ENCODE measurements at regions of chr18 and their contacts with region 1.

Region 1: DNA sequence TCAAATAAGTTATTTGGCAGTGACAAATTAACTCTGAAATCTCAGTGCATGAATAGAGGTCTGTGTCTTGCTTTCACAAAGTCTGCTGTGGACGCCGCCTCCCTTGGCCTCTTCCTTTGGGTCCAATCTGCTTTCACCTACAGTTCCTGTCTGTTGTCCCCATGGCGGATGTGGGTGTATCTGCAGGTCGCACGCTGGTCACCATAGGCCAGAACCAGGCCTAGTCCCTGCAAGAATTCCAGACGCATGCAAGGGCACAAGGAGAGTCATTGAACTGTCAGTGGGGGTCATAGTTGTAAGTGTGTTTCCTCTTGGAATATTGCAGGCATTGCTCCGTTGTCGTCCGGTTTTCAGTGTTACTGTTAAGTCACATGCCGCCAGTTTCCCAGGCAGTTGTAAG is 7.4 kb downstream of the SOCS6 start:
- DNase-seq: no peak
- ATAC-seq: peak; percentile 82
- H3K4me3 ChIP-seq: peak overlapping the region; percentile 36 to 55
- H3K27ac ChIP-seq: peak overlapping the region; percentile 98
- H3K4me1 ChIP-seq: peaks cover 54% of the 10 kb centered on the region
- H3K27me3 ChIP-seq: no peaks in the 10 kb centered on the region
- CTCF ChIP-seq: no peak

Region 2: GRCh38 chr18:69152436-69152835 is 1143.9 kb before region 1 on chr18:
- CTCF ChIA-PET with region 1: no interaction called
- POLR2A ChIA-PET with region 1: no interaction called
- in situ Hi-C with region 1: no loop called
- intact Hi-C with region 1: no loop called
- DNase-seq: no peak
- ATAC-seq: no peak
- H3K4me3 ChIP-seq: no peak overlapping the region
- H3K27ac ChIP-seq: no peak overlapping the region
- H3K4me1 ChIP-seq: no peaks in the 10 kb centered on the region
- H3K27me3 ChIP-seq: no peaks in the 10 kb centered on the region
- CTCF ChIP-seq: no peak

Region 3: GRCh38 chr18:69981948-69982347 is 314.3 kb before region 1 on chr18:
- CTCF ChIA-PET with region 1: no interaction called
- POLR2A ChIA-PET with region 1: no interaction called
- in situ Hi-C with region 1: no loop called
- intact Hi-C with region 1: no loop called
- DNase-seq: no peak
- ATAC-seq: no peak
- H3K4me3 ChIP-seq: no peak overlapping the region
- H3K27ac ChIP-seq: no peak overlapping the region
- H3K4me1 ChIP-seq: no peaks in the 10 kb centered on the region
- H3K27me3 ChIP-seq: no peaks in the 10 kb centered on the region
- CTCF ChIP-seq: no peak

Region 4: GRCh38 chr18:70205421-70206397 is 90.6 kb before region 1 on chr18 and contains the start of gene RTTN:
- CTCF ChIA-PET with region 1: no interaction called
- POLR2A ChIA-PET with region 1: no interaction called
- in situ Hi-C with region 1: no loop called
- intact Hi-C with region 1: loop called (anchors 5 kb)
- DNase-seq: peak; percentile 83
- ATAC-seq: peak; percentile 97
- H3K4me3 ChIP-seq: peak within 1 kb of the TSS; percentile 78 to 96
- H3K27ac ChIP-seq: peak within 1 kb of the TSS; percentile 84
- H3K4me1 ChIP-seq: peaks cover 23% of the 10 kb centered on the region
- H3K27me3 ChIP-seq: no peaks in the 10 kb centered on the region
- CTCF ChIP-seq: no peak
- total RNA-seq, gene RTTN: 16.9 TPM

Region 5: GRCh38 chr18:71398531-71398930 is 1102.2 kb after region 1 on chr18:
- CTCF ChIA-PET with region 1: no interaction called
- POLR2A ChIA-PET with region 1: no interaction called
- in situ Hi-C with region 1: no loop called
- intact Hi-C with region 1: no loop called
- DNase-seq: no peak
- ATAC-seq: no peak
- H3K4me3 ChIP-seq: no peak overlapping the region
- H3K27ac ChIP-seq: no peak overlapping the region
- H3K4me1 ChIP-seq: no peaks in the 10 kb centered on the region
- H3K27me3 ChIP-seq: no peaks in the 10 kb centered on the region
- CTCF ChIP-seq: peak; percentile 28; the same call in 1 of the 2 replicates